CD4-positive, alpha-beta T cell (primary cell): ENCODE measurements at regions of chr2 and their contacts with region 1.

Region 1: GRCh38 chr2:95115418-95115817 is 6.2 kb downstream of the MRPS5 start:
- DNase-seq: peak; percentile 59 to 87 (median 71)
- ATAC-seq: peak; percentile 99
- H3K4me3 ChIP-seq: no peak overlapping the region
- H3K4me3 Mint-ChIP-seq: peak overlapping the region; percentile 36
- H3K27ac ChIP-seq: no peak overlapping the region
- H3K27ac Mint-ChIP-seq: peak overlapping the region; percentile 45
- H3K4me1 ChIP-seq: peaks cover 27% of the 10 kb centered on the region
- H3K4me1 Mint-ChIP-seq: peaks cover 46% of the 10 kb centered on the region
- H3K27me3 ChIP-seq: no peaks in the 10 kb centered on the region
- H3K27me3 Mint-ChIP-seq: no peaks in the 10 kb centered on the region
- CTCF ChIP-seq: peak; percentile 89

Region 2: GRCh38 chr2:94874277-94875008 is 241.0 kb before region 1 on chr2:
- CTCF ChIA-PET with region 1: no interaction called
- POLR2A ChIA-PET with region 1: no interaction called
- intact Hi-C with region 1: loop called in 1 of 2 experiments (anchors 5 kb)
- DNase-seq: peak; percentile 22 to 69 (median 48)
- ATAC-seq: peak; percentile 56
- H3K4me3 ChIP-seq: no peak overlapping the region
- H3K4me3 Mint-ChIP-seq: no peak overlapping the region
- H3K27ac ChIP-seq: no peak overlapping the region
- H3K27ac Mint-ChIP-seq: no peak overlapping the region
- H3K4me1 ChIP-seq: peaks cover 6% of the 10 kb centered on the region
- H3K4me1 Mint-ChIP-seq: no peaks in the 10 kb centered on the region
- H3K27me3 ChIP-seq: peaks cover 2 to 4% of the 10 kb centered on the region in 2 experiments
- H3K27me3 Mint-ChIP-seq: peaks cover 20% of the 10 kb centered on the region
- CTCF ChIP-seq: peak; percentile 90

Region 3: DNA sequence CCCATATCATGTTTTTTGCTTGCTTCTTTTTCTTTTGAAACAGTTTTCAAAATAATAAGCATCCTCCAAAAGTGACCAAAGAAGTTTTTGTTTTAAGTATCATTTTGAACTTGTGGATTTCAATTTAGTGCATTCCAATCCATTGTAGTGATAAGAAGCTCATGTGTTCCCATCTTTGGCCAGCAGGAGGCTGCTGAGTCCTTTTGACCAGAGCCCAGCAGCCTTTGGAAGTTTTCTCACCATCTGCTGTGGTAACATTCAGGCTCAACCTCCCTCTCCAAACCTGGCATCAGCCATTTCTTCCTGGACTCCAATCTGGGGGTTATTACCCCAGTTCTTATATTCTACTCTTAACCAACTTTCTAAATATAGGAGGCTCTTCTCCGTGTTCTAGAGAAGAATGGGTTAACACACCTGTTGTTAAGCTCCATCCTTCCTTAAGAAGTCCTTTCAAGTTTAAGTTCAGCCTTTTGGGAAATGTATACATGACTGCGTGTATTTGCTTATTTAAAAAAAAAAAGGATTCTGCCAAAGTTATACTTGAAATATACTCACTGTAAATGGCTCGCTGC is 128.9 kb before region 1 on chr2:
- CTCF ChIA-PET with region 1: interaction called, 8 read pairs
- POLR2A ChIA-PET with region 1: no interaction called
- intact Hi-C with region 1: loop called (anchors 1 kb)
- DNase-seq: peak in 11 of 14 experiments; percentile 6 to 58 (median 24)
- ATAC-seq: no peak
- H3K4me3 ChIP-seq: no peak overlapping the region
- H3K4me3 Mint-ChIP-seq: no peak overlapping the region
- H3K27ac ChIP-seq: no peak overlapping the region
- H3K27ac Mint-ChIP-seq: no peak overlapping the region
- H3K4me1 ChIP-seq: no peaks in the 10 kb centered on the region
- H3K4me1 Mint-ChIP-seq: no peaks in the 10 kb centered on the region
- H3K27me3 ChIP-seq: peaks cover 0 to 4% of the 10 kb centered on the region in 2 experiments
- H3K27me3 Mint-ChIP-seq: peaks cover 22% of the 10 kb centered on the region
- CTCF ChIP-seq: peak; percentile 55

Region 4: GRCh38 chr2:95053543-95053942 is 61.9 kb before region 1 on chr2:
- CTCF ChIA-PET with region 1: interaction called, 5 read pairs
- POLR2A ChIA-PET with region 1: interaction called, 4 read pairs
- intact Hi-C with region 1: loop called in 1 of 2 experiments (anchors 2 kb)
- DNase-seq: peak in 3 of 14 experiments; percentile 23 to 45 (median 42)
- ATAC-seq: peak; percentile 11
- H3K4me3 ChIP-seq: no peak overlapping the region
- H3K4me3 Mint-ChIP-seq: peak overlapping the region; percentile 2
- H3K27ac ChIP-seq: no peak overlapping the region
- H3K27ac Mint-ChIP-seq: peak overlapping the region; percentile 83
- H3K4me1 ChIP-seq: peaks cover 75% of the 10 kb centered on the region
- H3K4me1 Mint-ChIP-seq: peaks cover 85% of the 10 kb centered on the region
- H3K27me3 ChIP-seq: no peaks in the 10 kb centered on the region
- H3K27me3 Mint-ChIP-seq: no peaks in the 10 kb centered on the region
- CTCF ChIP-seq: no peak

Region 5: GRCh38 chr2:95082477-95082876 is 32.9 kb before region 1 on chr2:
- CTCF ChIA-PET with region 1: interaction called, 20 read pairs
- POLR2A ChIA-PET with region 1: interaction called, 6 read pairs
- intact Hi-C with region 1: loop called (anchors 1 to 2 kb)
- DNase-seq: no peak
- ATAC-seq: no peak
- H3K4me3 ChIP-seq: no peak overlapping the region
- H3K4me3 Mint-ChIP-seq: no peak overlapping the region
- H3K27ac ChIP-seq: no peak overlapping the region
- H3K27ac Mint-ChIP-seq: peak overlapping the region; percentile 41
- H3K4me1 ChIP-seq: peaks cover 20% of the 10 kb centered on the region
- H3K4me1 Mint-ChIP-seq: peaks cover 25% of the 10 kb centered on the region
- H3K27me3 ChIP-seq: no peaks in the 10 kb centered on the region
- H3K27me3 Mint-ChIP-seq: no peaks in the 10 kb centered on the region
- CTCF ChIP-seq: no peak